ENCODE measurements at regions of chr1 and their contacts with region 1.

Region 1: GRCh38 chr1:28642847-28643635 is at the start of gene TAF12:
- DNase-seq: peak; percentile 96
- ATAC-seq: peak; percentile 97
- total RNA-seq, gene TAF12: 27.7 TPM

Region 2: DNA sequence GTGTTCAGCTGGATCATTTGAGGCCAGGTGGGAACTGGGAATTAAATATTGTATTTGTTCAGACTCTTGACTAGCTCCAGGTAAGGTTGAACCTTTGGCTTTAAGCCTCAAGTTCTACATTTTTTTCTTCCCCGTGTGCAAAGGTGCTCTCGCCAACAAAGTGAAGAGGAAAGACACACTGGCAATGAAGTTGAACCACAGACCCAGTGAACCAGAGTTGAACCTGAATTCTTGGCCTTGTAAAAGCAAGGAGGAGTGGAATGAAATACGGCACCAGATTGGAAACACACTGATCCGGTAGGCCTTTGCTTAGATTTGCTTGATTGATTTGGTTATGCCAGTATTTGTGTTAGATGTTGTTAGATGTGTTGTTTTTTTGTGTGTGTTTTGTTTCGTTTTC is 162.7 kb before region 1 on chr1:
- intact Hi-C with region 1: no loop called
- DNase-seq: no peak
- ATAC-seq: no peak

Region 3: GRCh38 chr1:28581536-28582247 is 61.3 kb before region 1 on chr1:
- intact Hi-C with region 1: loop called (anchors 2 kb)
- DNase-seq: peak; percentile 99
- ATAC-seq: peak; percentile 99

Region 4: GRCh38 chr1:28656335-28656734 is 13.3 kb after region 1 on chr1:
- intact Hi-C with region 1: no loop called
- DNase-seq: no peak
- ATAC-seq: no peak

Region 5: DNA sequence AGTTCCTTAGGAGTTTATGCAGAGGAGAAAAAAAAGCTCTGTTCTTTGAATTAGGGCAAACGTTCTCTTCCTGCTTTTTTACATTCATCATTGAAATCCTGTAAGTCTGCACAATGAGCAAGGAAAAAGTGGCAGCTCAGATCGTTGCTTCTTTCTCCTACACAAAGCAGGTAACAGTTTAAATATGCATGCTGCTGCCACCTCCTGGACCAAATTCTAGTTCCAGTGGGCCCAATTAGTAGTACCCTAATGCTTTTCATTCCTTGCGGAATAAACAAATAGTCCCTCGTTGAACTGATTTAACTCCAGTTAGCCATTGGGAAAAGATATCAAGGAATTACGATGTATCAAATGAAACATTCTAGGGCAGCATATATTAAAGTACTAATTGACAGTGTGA is 113.8 kb after region 1 on chr1:
- intact Hi-C with region 1: no loop called
- DNase-seq: no peak
- ATAC-seq: no peak

Region 6: DNA sequence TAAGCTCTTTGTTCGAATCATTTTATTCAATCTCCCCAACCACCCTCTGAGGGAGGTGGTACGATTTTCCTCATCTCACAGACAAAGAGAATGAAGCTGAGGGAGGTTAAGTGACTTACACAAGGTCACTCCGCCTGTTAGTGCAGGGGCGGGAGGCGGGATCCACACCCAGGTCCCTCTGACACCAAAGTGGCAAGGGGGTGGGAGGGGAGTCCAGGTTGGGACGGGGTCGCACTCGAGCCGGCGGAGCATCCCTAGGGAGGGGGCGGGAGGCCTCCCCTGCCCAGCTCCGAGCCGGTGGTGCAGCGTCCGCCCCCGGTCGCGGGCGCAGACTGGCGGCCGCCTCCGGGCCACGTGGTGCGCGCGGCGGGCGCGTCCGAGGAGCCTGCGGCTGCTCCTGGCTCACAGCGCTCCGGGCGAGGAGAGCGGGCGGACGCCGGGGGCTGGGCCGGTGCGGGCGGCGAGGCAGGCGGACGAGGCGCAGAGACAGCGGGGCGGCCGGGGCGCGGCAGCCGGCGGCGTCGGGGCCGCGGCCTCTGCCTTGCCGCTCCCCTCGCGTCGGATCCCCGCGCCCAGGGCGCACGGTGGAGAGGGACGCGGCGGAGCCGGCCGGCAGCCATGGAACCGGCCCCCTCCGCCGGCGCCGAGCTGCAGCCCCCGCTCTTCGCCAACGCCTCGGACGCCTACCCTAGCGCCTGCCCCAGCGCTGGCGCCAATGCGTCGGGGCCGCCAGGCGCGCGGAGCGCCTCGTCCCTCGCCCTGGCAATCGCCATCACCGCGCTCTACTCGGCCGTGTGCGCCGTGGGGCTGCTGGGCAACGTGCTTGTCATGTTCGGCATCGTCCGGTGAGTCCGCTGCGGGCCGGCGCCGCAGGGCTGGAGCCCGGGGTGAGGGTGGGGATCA is 169.0 kb after region 1 on chr1 and contains the start of gene OPRD1:
- intact Hi-C with region 1: no loop called
- DNase-seq: no peak
- ATAC-seq: no peak
- total RNA-seq, gene OPRD1: not detected